GM12878 (cell line): ENCODE measurements at regions of chr19 and their contacts with region 1.

Region 1: DNA sequence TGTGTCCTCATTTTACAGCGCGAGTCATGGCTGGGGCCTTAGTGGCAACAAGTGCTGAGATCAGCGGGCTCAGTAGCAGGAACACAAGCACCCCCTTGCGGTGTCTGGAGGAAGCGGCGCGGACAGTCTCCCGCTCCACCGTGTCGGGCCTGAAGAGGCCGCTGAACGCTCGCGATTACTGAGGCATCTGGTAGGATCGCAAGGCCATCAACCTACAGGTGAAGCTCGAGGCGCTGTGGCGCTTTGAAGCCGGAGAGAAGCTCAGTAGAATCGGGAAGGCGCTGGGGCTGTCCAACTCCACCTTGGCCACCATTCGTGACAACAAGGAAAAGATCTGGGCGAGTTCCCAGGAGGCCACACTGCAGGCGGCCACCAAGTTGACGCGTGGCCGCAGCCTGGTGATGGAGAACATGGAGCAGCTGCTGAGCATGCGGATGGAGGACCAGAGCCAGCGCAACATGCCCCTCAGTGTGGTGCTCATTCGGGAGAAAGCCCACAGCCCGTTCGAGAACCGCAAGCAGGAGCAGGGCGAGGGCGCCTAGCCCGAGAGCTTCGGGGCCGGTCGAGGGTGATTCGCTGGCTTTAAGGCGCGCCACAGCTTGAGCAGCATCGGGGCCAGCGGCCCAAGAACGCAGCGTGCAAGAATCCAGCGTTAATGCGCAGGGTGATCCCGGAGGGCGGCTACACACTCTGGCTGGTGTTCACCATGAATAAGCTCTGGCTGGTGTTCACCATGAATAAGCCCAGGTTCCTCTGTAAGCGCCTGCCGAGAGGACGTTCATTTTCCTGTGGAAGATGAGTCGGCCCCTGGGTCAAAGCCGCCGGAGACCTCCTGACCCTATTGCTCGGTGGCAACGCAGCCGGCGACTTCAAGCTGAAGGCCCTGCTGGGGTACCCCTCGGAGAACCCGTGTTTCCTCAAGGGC is 8.4 kb upstream of the MZF1 start:
- DNase-seq: no peak
- ATAC-seq: peak; percentile 91
- H3K4me3 ChIP-seq: no peak overlapping the region
- H3K27ac ChIP-seq: no peak overlapping the region
- H3K4me1 ChIP-seq: peaks cover 20% of the 10 kb centered on the region
- H3K27me3 ChIP-seq: no peaks in the 10 kb centered on the region
- CTCF ChIP-seq: peak; percentile 70 to 99 (median 87)
- EP300 ChIP-seq: no peak
- POLR2A ChIP-seq: no peak
- RAD21 ChIP-seq: no peak

Region 2: GRCh38 chr19:58400916-58401839 is 180.3 kb before region 1 on chr19:
- CTCF ChIA-PET with region 1: no interaction called
- POLR2A ChIA-PET with region 1: interaction called, 10 read pairs
- RAD21 ChIA-PET with region 1: no interaction called
- SMC1A ChIA-PET with region 1: no interaction called
- in situ Hi-C with region 1: no loop called
- intact Hi-C with region 1: no loop called
- DNase-seq: peak; percentile 96
- ATAC-seq: peak; percentile 98
- H3K4me3 ChIP-seq: peak overlapping the region; percentile 76
- H3K27ac ChIP-seq: no peak overlapping the region
- H3K4me1 ChIP-seq: peaks cover 10% of the 10 kb centered on the region
- H3K27me3 ChIP-seq: no peaks in the 10 kb centered on the region
- CTCF ChIP-seq: no peak
- EP300 ChIP-seq: peak in 1 of 2 experiments; percentile 21; a peak in 1 of 4 replicates
- POLR2A ChIP-seq: peak; percentile 97
- RAD21 ChIP-seq: no peak

Region 3: GRCh38 chr19:58536852-58537798 is 44.4 kb before region 1 on chr19:
- CTCF ChIA-PET with region 1: no interaction called
- POLR2A ChIA-PET with region 1: no interaction called
- RAD21 ChIA-PET with region 1: no interaction called
- SMC1A ChIA-PET with region 1: no interaction called
- in situ Hi-C with region 1: no loop called
- intact Hi-C with region 1: no loop called
- DNase-seq: no peak
- ATAC-seq: peak; percentile 18; the same call in 1 of the 3 replicates
- H3K4me3 ChIP-seq: no peak overlapping the region
- H3K27ac ChIP-seq: no peak overlapping the region
- H3K4me1 ChIP-seq: no peaks in the 10 kb centered on the region
- H3K27me3 ChIP-seq: peaks cover 0 to 1% of the 10 kb centered on the region in 2 experiments; a peak in 2 of 4 replicates
- CTCF ChIP-seq: no peak
- EP300 ChIP-seq: no peak
- POLR2A ChIP-seq: no peak
- RAD21 ChIP-seq: no peak